ENCODE measurements at regions of chr6 and their contacts with region 1.

Region 1: GRCh38 chr6:113672491-113673149 is 184.5 kb upstream of the MARCKS start:
- DNase-seq: no peak
- ATAC-seq: no peak
- H3K4me3 ChIP-seq: no peak overlapping the region
- H3K27ac ChIP-seq: no peak overlapping the region
- H3K4me1 ChIP-seq: peaks cover 27% of the 10 kb centered on the region
- H3K27me3 ChIP-seq: no peaks in the 10 kb centered on the region
- CTCF ChIP-seq: no peak
- EP300 ChIP-seq: no peak
- POLR2A ChIP-seq: no peak
- RAD21 ChIP-seq: no peak

Region 2: GRCh38 chr6:113654396-113654795 is 18.2 kb before region 1 on chr6:
- CTCF ChIA-PET with region 1: interaction called, 4 read pairs
- POLR2A ChIA-PET with region 1: interaction called, 13 read pairs
- RAD21 ChIA-PET with region 1: interaction called, 32 read pairs
- SMC1A ChIA-PET with region 1: interaction called, 234 read pairs
- in situ Hi-C with region 1: no loop called
- intact Hi-C with region 1: no loop called
- DNase-seq: no peak
- ATAC-seq: no peak
- H3K4me3 ChIP-seq: no peak overlapping the region
- H3K27ac ChIP-seq: peak overlapping the region; percentile 58; the same call in 1 of the 2 replicates
- H3K4me1 ChIP-seq: peaks cover 45% of the 10 kb centered on the region
- H3K27me3 ChIP-seq: no peaks in the 10 kb centered on the region
- CTCF ChIP-seq: no peak
- EP300 ChIP-seq: no peak
- POLR2A ChIP-seq: no peak
- RAD21 ChIP-seq: no peak

Region 3: DNA sequence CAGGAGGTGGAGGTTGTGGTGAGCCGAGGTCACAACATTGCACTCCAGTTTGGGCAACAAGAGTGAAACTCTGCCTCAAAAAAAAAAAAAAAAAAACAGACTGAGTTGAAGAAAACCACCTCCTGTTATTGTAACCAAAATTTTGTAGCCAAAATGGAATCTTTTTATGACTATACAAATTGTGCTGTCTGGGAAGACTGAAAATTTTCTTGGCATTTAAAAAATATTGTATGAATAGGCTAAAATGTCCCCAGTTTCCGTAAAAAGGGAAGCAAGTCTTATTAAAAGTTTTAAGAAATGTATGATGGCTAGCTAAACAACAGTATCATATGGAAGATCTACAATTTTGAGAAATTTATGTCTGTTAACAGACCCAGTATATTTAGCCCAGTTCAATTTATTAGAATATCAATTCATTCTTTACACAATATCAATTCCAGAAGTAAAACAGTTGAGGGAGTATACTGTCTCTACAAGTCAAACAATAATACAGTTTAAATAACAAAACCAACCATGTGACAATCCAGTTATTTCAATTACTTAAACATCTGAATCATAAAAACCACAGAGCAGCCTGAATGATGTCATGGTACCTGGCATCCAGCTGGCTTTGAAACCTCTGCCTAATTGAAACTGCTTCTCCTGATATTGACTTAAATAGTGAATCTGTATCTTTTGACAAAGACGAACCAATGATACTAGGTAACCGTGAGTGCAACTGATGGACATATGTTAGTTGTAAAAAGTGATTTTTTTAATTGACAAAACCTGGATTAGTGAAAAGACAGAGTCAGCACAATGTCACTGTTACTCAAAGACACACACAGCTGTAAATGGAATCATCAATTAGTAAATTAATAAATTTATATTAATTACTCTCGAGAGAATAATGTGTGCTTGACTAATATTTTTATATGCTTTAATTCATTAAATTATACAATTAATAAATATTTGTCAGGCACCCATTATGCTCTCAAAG is 17.9 kb after region 1 on chr6:
- CTCF ChIA-PET with region 1: interaction called, 4 read pairs
- POLR2A ChIA-PET with region 1: interaction called, 3 read pairs
- RAD21 ChIA-PET with region 1: interaction called, 3 read pairs
- SMC1A ChIA-PET with region 1: interaction called, 55 read pairs
- in situ Hi-C with region 1: no loop called
- intact Hi-C with region 1: no loop called
- DNase-seq: peak; percentile 34
- ATAC-seq: peak; percentile 89
- H3K4me3 ChIP-seq: no peak overlapping the region
- H3K27ac ChIP-seq: no peak overlapping the region
- H3K4me1 ChIP-seq: no peaks in the 10 kb centered on the region
- H3K27me3 ChIP-seq: no peaks in the 10 kb centered on the region
- CTCF ChIP-seq: no peak
- EP300 ChIP-seq: 0 out of 4 replicates have a peak, but pooled peaks of 1 of the 2 experiments have one; percentile 30
- POLR2A ChIP-seq: no peak
- RAD21 ChIP-seq: no peak